Psoas muscle (tissue), 8 donors: ENCODE measurements at regions of chr14 and their contacts with region 1.

Region 1: GRCh38 chr14:20613094-20614037 is 22.2 kb upstream of the RNASE12 start:
- DNase-seq: peak; percentile 78 to 85
- ATAC-seq: peak; percentile 78 to 84 (median 80)
- H3K4me3 ChIP-seq: peak overlapping the region; percentile 74
- H3K27ac ChIP-seq: peak overlapping the region; percentile 62
- H3K4me1 ChIP-seq: peaks cover 29% of the 10 kb centered on the region
- H3K27me3 ChIP-seq: no peaks in the 10 kb centered on the region
- CTCF ChIP-seq: peak; percentile 68

Region 2: GRCh38 chr14:20305265-20306078 is 307.9 kb before region 1 on chr14 and contains the start of gene TTC5:
- intact Hi-C with region 1: loop called in 1 of 2 experiments (anchors 1 kb)
- DNase-seq: peak; percentile 81 to 91
- ATAC-seq: peak; percentile 84 to 100 (median 98)
- H3K4me3 ChIP-seq: peak within 1 kb of the TSS; percentile 90
- H3K27ac ChIP-seq: peak within 1 kb of the TSS; percentile 56
- H3K4me1 ChIP-seq: peaks cover 7% of the 10 kb centered on the region
- H3K27me3 ChIP-seq: no peaks in the 10 kb centered on the region
- CTCF ChIP-seq: peak; percentile 85
- total RNA-seq, gene TTC5: 4.2 to 10.4 (median 7.5) TPM

Region 3: GRCh38 chr14:20413045-20413799 is 200.1 kb before region 1 on chr14 and contains the start of gene TEP1:
- intact Hi-C with region 1: loop called (anchors 2 to 5 kb)
- DNase-seq: peak; percentile 91 to 94
- ATAC-seq: peak; percentile 89 to 95 (median 92)
- H3K4me3 ChIP-seq: peak within 1 kb of the TSS; percentile 92
- H3K27ac ChIP-seq: peak within 1 kb of the TSS; percentile 100
- H3K4me1 ChIP-seq: peaks cover 31% of the 10 kb centered on the region
- H3K27me3 ChIP-seq: no peaks in the 10 kb centered on the region
- CTCF ChIP-seq: no peak
- total RNA-seq, gene TEP1: 14.7 to 44.8 (median 21.2) TPM

Region 4: DNA sequence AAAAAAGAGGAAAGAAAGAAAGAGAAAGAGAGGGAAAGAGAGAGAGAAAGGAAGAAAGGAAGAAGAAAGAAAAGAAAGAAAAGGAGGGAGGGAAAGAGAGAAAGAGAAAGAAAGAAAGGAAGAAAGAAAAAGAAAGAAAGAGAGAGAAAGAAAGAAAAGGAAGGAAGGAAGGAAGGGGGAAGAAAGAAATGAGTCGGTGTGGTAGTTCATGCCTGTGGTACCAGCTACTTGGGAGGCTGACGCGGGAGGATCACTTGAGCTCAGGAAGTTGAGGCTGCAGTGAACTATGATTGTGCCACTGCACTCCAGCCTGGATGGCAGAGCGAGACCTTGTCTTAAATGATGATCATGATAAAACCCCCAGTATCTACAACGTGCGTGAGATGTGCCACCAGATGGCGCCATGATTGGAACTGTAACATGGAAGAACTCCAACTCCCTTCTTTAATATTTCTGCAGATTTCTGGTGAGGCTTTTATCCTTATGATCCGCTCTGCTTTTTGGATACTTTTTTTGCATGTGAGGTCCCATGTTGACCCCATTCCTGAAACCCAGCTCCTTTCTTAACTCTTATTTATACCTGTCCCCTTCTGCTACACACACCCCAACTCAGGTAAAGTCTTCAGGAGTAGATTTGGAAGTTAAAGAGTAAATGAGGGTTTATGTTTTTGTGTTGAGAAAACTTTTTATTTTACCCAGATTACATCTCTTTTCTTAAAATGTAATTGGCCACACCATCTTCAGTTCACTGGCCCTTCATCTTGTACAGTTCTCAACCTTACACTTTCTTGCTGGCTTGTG is 82.4 kb before region 1 on chr14:
- intact Hi-C with region 1: loop called (anchors 2 to 5 kb)
- DNase-seq: peak; percentile 67 to 76
- ATAC-seq: peak in 3 of 4 donors; percentile 58 to 71 (median 66)
- H3K4me3 ChIP-seq: no peak overlapping the region
- H3K27ac ChIP-seq: no peak overlapping the region
- H3K4me1 ChIP-seq: no peaks in the 10 kb centered on the region
- H3K27me3 ChIP-seq: peaks cover 0 to 4% (median 0%) of the 10 kb centered on the region in 3 donors
- CTCF ChIP-seq: peak; percentile 62

Region 5: GRCh38 chr14:20690848-20691523 is 77.6 kb after region 1 on chr14:
- intact Hi-C with region 1: loop called in 1 of 2 experiments (anchors 2 kb)
- DNase-seq: no peak
- ATAC-seq: peak; percentile 83 to 95 (median 89)
- H3K4me3 ChIP-seq: no peak overlapping the region
- H3K27ac ChIP-seq: no peak overlapping the region
- H3K4me1 ChIP-seq: peaks cover 4% of the 10 kb centered on the region
- H3K27me3 ChIP-seq: no peaks in the 10 kb centered on the region
- CTCF ChIP-seq: peak; percentile 87

Region 6: GRCh38 chr14:20956376-20956976 is 343.1 kb after region 1 on chr14:
- intact Hi-C with region 1: loop called in 1 of 2 experiments (anchors 10 kb)
- DNase-seq: no peak
- ATAC-seq: no peak
- H3K4me3 ChIP-seq: no peak overlapping the region
- H3K27ac ChIP-seq: no peak overlapping the region
- H3K4me1 ChIP-seq: no peaks in the 10 kb centered on the region
- H3K27me3 ChIP-seq: peaks cover 0 to 13% (median 0%) of the 10 kb centered on the region in 3 donors
- CTCF ChIP-seq: no peak